ENCODE measurements at regions of chr1 and their contacts with region 1.

Region 1: GRCh38 chr1:233440951-233441401 is 113.5 kb downstream of the MAP3K21 start:
- DNase-seq: peak; percentile 4
- ATAC-seq: no peak
- H3K4me3 Mint-ChIP-seq: no peak overlapping the region
- H3K27ac Mint-ChIP-seq: no peak overlapping the region
- H3K4me1 Mint-ChIP-seq: no peaks in the 10 kb centered on the region
- H3K27me3 Mint-ChIP-seq: peaks cover 19% of the 10 kb centered on the region
- CTCF ChIP-seq: peak; percentile 48

Region 2: GRCh38 chr1:233295975-233296322 is 145.0 kb before region 1 on chr1:
- CTCF ChIA-PET with region 1: no interaction called
- POLR2A ChIA-PET with region 1: no interaction called
- intact Hi-C with region 1: no loop called
- DNase-seq: no peak
- ATAC-seq: no peak
- H3K4me3 Mint-ChIP-seq: peak overlapping the region; percentile 88
- H3K27ac Mint-ChIP-seq: peak overlapping the region; percentile 91
- H3K4me1 Mint-ChIP-seq: peaks cover 29% of the 10 kb centered on the region
- H3K27me3 Mint-ChIP-seq: no peaks in the 10 kb centered on the region
- CTCF ChIP-seq: no peak

Region 3: DNA sequence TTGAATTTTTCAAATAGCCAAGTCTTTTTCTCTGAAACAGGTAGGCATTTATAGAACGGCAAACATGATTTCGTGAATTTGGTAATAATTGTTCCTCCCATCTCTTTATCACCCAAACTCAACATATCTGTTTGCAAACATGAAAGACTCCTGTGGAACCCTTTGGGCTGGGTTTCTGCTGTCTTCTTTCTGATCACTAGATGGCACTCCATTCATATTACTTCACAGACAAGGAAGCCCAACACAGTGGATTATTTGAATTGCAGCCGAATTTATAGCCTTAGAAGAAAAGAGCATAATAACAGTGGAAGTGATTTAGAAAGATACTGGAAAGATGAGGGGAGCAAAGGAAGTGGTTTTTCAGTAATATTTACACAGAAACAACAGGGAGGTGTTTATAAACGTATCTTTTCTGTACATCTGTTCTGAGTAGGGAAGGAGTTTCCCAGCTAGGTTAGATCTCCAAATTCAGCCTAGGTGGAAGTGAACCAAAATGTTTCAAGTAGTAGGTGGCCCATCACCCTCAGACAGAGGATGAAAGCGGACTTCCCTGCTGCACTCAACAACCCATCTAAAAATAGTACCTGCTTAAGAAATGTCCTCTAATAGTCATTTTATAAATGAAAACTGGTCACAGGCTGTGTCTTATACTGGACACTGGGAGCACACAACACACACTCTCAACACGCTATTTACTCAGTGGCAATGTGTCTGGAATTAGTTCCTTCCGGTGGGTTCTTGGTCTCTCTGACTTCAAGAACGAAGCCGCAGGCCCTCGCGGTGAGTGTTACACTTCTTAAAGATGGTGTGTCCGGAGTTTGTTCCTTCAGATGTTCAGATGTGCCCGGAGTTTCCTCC is 45.9 kb before region 1 on chr1:
- CTCF ChIA-PET with region 1: interaction called, 13 read pairs
- POLR2A ChIA-PET with region 1: no interaction called
- intact Hi-C with region 1: no loop called
- DNase-seq: peak; percentile 34
- ATAC-seq: peak; percentile 65
- H3K4me3 Mint-ChIP-seq: no peak overlapping the region
- H3K27ac Mint-ChIP-seq: no peak overlapping the region
- H3K4me1 Mint-ChIP-seq: no peaks in the 10 kb centered on the region
- H3K27me3 Mint-ChIP-seq: peaks cover 20% of the 10 kb centered on the region
- CTCF ChIP-seq: peak; percentile 80

Region 4: DNA sequence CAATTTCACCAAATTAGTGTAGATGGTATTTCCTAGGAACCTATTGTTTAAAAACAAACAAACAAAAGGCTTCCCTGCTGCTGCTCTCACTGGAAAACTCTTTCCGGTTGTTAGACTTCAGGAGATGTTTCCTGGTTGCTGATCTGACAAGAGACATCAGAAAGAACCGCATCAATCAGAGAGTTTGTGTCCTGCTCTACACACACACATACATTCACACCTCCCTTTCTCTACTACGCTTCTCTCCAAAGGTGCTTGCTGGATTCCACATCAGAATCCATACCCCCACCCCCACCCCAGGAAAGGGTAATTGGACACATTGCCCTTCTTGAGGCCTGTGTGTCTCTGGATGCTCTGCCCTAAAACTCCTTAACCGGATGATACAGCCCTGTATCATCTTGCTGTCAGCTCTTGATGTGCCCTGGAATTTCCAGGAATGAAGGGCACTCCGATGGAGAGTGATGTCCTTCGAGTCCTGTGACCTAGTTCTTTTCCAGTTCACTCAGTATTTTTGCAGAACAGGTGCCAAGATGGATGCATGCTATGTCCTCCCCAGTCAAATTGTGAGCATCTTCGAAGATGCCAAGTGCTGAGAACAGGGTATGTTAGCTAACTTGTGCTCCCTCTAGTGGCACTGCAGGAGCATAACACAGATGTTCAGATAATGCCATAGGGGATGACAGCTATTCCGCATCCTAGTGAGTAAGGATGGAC is 349.8 kb after region 1 on chr1:
- CTCF ChIA-PET with region 1: interaction called, 9 read pairs
- POLR2A ChIA-PET with region 1: no interaction called
- intact Hi-C with region 1: loop called (anchors 2 kb)
- DNase-seq: peak; percentile 16
- ATAC-seq: peak; percentile 72
- H3K4me3 Mint-ChIP-seq: no peak overlapping the region
- H3K27ac Mint-ChIP-seq: no peak overlapping the region
- H3K4me1 Mint-ChIP-seq: no peaks in the 10 kb centered on the region
- H3K27me3 Mint-ChIP-seq: peaks cover 11% of the 10 kb centered on the region
- CTCF ChIP-seq: peak; percentile 83

Region 5: DNA sequence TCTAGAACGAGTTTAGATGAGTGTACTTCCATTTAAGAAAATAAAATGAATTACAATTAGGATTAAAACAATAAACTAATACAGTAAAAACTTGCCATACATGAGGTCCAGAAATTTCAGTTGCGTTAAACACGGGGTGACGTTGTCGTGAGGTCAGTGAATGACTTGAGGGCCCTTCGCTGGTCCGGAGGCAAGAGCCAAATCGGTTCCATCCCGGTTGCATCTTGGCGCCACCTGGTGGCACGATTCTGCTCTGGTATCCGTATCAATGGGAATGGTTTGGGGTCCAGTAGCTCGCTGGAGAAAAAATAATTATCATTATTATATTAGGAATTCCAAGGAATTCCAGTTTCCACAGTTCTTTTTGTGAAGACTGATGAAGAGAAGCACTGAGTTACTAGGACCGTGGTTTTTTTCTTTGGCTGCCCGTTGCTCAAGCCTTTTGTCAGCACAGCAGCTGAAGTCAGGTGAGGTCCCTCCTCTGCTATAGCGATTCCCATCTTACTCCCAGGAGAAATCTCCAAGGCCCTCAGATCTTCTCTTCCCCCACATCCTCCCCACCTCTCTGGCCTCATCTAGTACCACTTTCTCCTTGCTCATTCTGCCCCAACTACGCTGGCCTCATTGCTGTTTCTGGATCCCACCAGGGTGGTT is 624.9 kb after region 1 on chr1:
- CTCF ChIA-PET with region 1: interaction called, 26 read pairs
- POLR2A ChIA-PET with region 1: no interaction called
- intact Hi-C with region 1: no loop called
- DNase-seq: peak; percentile 86
- ATAC-seq: no peak
- H3K4me3 Mint-ChIP-seq: no peak overlapping the region
- H3K27ac Mint-ChIP-seq: no peak overlapping the region
- H3K4me1 Mint-ChIP-seq: no peaks in the 10 kb centered on the region
- H3K27me3 Mint-ChIP-seq: peaks cover 3% of the 10 kb centered on the region
- CTCF ChIP-seq: peak; percentile 78

Measured in activated CD8-positive, alpha-beta T cell treated with anti-CD3 and anti-CD28 coated beads for 36 hours (primary cell).